Calu3 (cell line): ENCODE measurements at regions of chr14 and their contacts with region 1.

Region 1: DNA sequence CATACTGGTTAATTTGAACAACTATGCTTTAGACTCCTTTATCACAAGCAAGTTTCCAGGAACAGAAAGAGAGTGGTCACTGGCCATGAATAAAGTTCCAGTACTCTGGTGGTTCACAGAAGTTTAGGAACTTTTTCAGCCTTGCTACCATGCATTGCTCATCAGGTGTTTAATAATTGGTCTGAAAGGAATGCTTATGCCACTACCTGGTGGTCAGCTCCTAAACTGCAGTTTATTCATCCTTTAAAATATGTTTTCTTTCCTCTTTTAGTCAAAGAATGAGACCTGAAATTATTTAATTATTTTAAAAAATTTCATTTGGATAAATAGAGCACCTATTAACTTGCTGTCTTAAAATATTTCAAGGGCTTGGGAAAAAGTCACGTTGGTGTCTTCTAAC is 260.1 kb upstream of the OR4E1 start:
- DNase-seq: no peak
- H3K4me3 Mint-ChIP-seq: no peak overlapping the region
- H3K27ac Mint-ChIP-seq: no peak overlapping the region
- H3K4me1 Mint-ChIP-seq: no peaks in the 10 kb centered on the region
- H3K27me3 Mint-ChIP-seq: peaks cover 8% of the 10 kb centered on the region
- CTCF ChIP-seq: peak; percentile 19

Region 2: DNA sequence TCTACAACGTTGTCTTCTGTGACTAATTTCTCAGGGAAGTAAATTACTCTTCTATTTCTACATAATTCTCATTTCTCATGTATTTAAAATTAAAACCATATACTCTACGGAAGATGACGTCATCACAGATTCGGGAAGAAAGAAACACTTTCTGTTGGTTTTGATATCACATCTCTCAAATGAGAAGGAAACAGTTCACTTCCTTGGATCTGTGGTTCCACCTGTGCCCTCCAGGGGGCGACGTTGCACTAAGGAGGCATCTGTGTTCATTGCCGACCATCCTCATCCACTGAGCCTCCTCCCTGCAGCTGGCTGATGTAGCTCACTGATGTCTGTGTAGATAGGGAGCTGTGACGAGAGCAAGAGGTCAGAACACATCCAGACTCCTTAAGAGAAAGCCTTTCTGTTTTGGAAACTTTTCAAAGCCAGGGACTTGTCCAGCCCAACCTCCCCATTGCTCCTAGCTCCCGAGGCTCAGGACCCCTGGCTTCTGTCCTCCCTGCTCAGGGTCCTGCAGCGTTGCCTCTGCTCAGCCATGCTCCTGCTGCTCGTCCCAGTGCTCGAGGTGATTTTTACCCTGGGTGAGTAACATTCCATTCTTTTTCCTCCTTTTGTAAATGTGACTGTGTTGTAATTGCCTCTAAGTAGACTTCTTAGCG is 87.3 kb before region 1 on chr14:
- CTCF ChIA-PET with region 1: no interaction called
- intact Hi-C with region 1: loop called (anchors 5 kb)
- DNase-seq: peak; percentile 66
- H3K4me3 Mint-ChIP-seq: no peak overlapping the region
- H3K27ac Mint-ChIP-seq: no peak overlapping the region
- H3K4me1 Mint-ChIP-seq: peaks cover 6% of the 10 kb centered on the region
- H3K27me3 Mint-ChIP-seq: peaks cover 70% of the 10 kb centered on the region
- CTCF ChIP-seq: peak; percentile 32

Region 3: GRCh38 chr14:21868442-21869046 is 65.1 kb before region 1 on chr14:
- CTCF ChIA-PET with region 1: no interaction called
- intact Hi-C with region 1: loop called (anchors 1 kb)
- DNase-seq: peak; percentile 69
- H3K4me3 Mint-ChIP-seq: no peak overlapping the region
- H3K27ac Mint-ChIP-seq: no peak overlapping the region
- H3K4me1 Mint-ChIP-seq: no peaks in the 10 kb centered on the region
- H3K27me3 Mint-ChIP-seq: peaks cover 36% of the 10 kb centered on the region
- CTCF ChIP-seq: peak; percentile 55

Region 4: DNA sequence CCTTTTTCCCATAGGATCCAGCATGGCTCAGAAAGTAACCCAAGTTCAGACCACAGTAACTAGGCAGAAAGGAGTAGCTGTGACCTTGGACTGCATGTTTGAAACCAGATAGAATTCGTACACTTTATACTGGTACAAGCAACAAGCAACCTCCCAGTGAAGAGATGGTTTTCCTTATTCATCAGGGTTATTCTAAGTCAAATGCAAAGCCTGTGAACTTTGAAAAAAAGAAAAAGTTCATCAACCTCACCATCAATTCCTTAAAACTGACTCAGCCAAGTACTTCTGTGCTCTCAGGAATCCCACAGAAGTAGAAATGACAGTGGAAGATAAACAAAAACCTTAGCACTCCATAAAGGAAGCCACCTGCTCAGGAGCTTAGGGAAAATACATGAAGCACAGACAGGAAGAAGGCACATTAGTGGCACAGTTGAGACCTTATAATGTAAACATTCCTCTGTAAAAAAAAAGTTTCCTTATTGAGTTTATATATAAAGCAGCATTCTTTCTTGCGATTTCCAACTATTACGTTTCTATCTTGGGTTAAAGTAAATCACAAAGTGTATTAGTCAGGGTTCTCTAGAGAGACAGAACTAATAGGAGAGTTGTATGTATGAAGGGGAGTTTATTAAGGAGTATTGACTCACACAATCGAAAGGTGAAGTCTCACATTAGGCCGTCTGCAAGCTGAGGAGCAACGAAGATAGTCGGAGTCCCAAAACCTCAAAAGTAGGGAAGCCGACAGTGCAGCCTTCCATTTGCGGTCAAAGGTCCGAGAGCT is 256.9 kb after region 1 on chr14:
- CTCF ChIA-PET with region 1: no interaction called
- intact Hi-C with region 1: no loop called
- DNase-seq: no peak
- H3K4me3 Mint-ChIP-seq: no peak overlapping the region
- H3K27ac Mint-ChIP-seq: no peak overlapping the region
- H3K4me1 Mint-ChIP-seq: peaks cover 32% of the 10 kb centered on the region
- H3K27me3 Mint-ChIP-seq: no peaks in the 10 kb centered on the region
- CTCF ChIP-seq: no peak